PC-9 (cell line): ENCODE measurements at regions of chr17 and their contacts with region 1.

Region 1: GRCh38 chr17:2954898-2955445 is 108.4 kb downstream of the OR1D5 start:
- DNase-seq: peak; percentile 80 to 99
- H3K4me3 ChIP-seq: no peak overlapping the region
- H3K27ac ChIP-seq: peak overlapping the region; percentile 77
- H3K4me1 ChIP-seq: peaks cover 47% of the 10 kb centered on the region
- H3K27me3 ChIP-seq: no peaks in the 10 kb centered on the region
- CTCF ChIP-seq: no peak

Region 2: GRCh38 chr17:2892305-2892971 is 62.5 kb before region 1 on chr17:
- CTCF ChIA-PET with region 1: no interaction called
- POLR2A ChIA-PET with region 1: no interaction called
- intact Hi-C with region 1: loop called (anchors 1 kb)
- DNase-seq: peak; percentile 77 to 90
- H3K4me3 ChIP-seq: no peak overlapping the region
- H3K27ac ChIP-seq: peak overlapping the region; percentile 84
- H3K4me1 ChIP-seq: peaks cover 44% of the 10 kb centered on the region
- H3K27me3 ChIP-seq: no peaks in the 10 kb centered on the region
- CTCF ChIP-seq: no peak

Region 3: GRCh38 chr17:2905696-2906501 is 49.1 kb before region 1 on chr17:
- CTCF ChIA-PET with region 1: no interaction called
- POLR2A ChIA-PET with region 1: interaction called, 17 read pairs
- intact Hi-C with region 1: no loop called
- DNase-seq: no peak
- H3K4me3 ChIP-seq: no peak overlapping the region
- H3K27ac ChIP-seq: no peak overlapping the region
- H3K4me1 ChIP-seq: no peaks in the 10 kb centered on the region
- H3K27me3 ChIP-seq: no peaks in the 10 kb centered on the region
- CTCF ChIP-seq: no peak

Region 4: GRCh38 chr17:2940352-2940751 is 14.6 kb before region 1 on chr17:
- CTCF ChIA-PET with region 1: no interaction called
- POLR2A ChIA-PET with region 1: interaction called, 10 read pairs
- intact Hi-C with region 1: no loop called
- DNase-seq: no peak
- H3K4me3 ChIP-seq: no peak overlapping the region
- H3K27ac ChIP-seq: no peak overlapping the region
- H3K4me1 ChIP-seq: peaks cover 9% of the 10 kb centered on the region
- H3K27me3 ChIP-seq: no peaks in the 10 kb centered on the region
- CTCF ChIP-seq: no peak

Region 5: DNA sequence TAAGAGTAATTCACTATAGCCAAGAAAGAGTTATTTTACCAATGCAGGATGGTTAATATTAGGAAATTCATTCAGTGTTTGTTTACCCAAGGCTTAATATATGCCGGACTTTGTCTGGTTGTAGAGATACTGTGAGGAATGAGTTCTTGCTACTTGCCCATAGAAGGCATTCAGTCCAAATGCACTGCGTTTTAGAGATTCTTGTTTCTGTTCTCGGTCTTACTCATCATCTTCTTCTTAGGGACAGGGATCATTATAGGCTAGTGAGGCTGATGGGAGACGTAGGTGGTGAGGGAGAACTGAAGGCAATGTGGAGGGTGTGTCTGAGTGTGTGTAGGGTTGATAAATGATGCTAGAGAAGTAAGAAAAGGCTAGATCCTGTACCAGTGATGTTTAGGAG is 17.8 kb after region 1 on chr17:
- CTCF ChIA-PET with region 1: no interaction called
- POLR2A ChIA-PET with region 1: no interaction called
- intact Hi-C with region 1: no loop called
- DNase-seq: no peak
- H3K4me3 ChIP-seq: no peak overlapping the region
- H3K27ac ChIP-seq: no peak overlapping the region
- H3K4me1 ChIP-seq: peaks cover 6% of the 10 kb centered on the region
- H3K27me3 ChIP-seq: no peaks in the 10 kb centered on the region
- CTCF ChIP-seq: no peak

Region 6: GRCh38 chr17:2998991-2999390 is 44.0 kb after region 1 on chr17:
- CTCF ChIA-PET with region 1: no interaction called
- POLR2A ChIA-PET with region 1: interaction called, 3 read pairs
- intact Hi-C with region 1: loop called (anchors 1 kb)
- DNase-seq: no peak
- H3K4me3 ChIP-seq: no peak overlapping the region
- H3K27ac ChIP-seq: no peak overlapping the region
- H3K4me1 ChIP-seq: peaks cover 7% of the 10 kb centered on the region
- H3K27me3 ChIP-seq: no peaks in the 10 kb centered on the region
- CTCF ChIP-seq: no peak